AG04450 (cell line): ENCODE measurements at regions of chr2 and their contacts with region 1.

Region 1: GRCh38 chr2:97697252-97698235 is 15.8 kb upstream of the ZAP70 start:
- DNase-seq: peak; percentile 50
- H3K4me3 ChIP-seq: no peak overlapping the region
- H3K27ac ChIP-seq: no peak overlapping the region
- H3K27me3 ChIP-seq: no peaks in the 10 kb centered on the region
- CTCF ChIP-seq: peak; percentile 95

Region 2: DNA sequence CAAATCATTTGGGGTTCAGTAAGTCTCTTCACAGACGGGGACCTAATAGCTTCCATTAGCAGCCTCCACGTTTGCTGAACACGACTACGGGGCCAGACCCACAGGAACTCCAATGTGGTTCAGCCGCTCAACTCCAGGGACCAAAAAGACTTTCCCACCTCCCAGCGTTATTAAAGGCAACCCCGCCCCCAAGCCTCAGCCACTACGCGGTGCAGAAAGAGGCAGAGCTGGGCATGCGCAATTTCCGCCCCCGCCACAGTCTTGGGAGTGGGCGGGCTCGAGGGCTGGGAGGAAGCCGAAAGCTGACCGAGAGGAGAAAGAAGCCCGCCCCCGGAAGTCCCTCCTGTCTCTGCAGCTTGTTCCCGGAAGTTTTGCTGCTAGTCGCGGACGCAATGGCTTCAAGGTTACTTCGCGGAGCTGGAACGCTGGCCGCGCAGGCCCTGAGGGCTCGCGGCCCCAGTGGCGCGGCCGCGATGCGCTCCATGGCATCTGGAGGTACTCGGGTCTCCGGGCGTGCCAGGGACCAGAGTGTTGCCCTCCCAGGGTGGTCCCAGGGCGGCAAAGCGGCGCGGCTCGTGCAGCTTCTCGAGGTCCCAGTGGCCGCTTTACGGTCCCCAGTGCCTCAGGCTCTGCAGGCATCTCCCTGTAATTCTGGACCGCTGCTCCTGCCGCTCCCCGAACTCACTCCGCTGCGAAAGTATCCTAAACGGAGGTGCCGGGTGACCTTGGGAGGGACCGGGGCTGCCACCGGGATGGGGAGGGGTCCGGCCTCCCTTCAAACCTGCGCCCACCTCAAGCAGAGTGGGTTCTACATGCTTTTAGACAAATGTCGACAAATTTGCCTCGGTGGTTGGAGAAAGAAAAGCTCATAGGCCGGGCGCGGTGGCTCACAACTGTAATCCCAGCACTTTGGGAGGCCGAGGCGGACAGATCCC is 51.6 kb before region 1 on chr2 and contains the start of gene COX5B:
- CTCF ChIA-PET with region 1: interaction called, 10 read pairs
- POLR2A ChIA-PET with region 1: interaction called, 3 read pairs
- DNase-seq: peak; percentile 92
- H3K4me3 ChIP-seq: peak within 1 kb of the TSS; percentile 97
- H3K27ac ChIP-seq: peak within 1 kb of the TSS; percentile 49
- H3K27me3 ChIP-seq: no peaks in the 10 kb centered on the region
- CTCF ChIP-seq: no peak
- polyA plus RNA-seq, gene COX5B: 287 and 302 TPM in 2 replicates

Region 3: GRCh38 chr2:97710596-97711386 is 13.2 kb after region 1 on chr2:
- CTCF ChIA-PET with region 1: interaction called, 38 read pairs
- POLR2A ChIA-PET with region 1: interaction called, 3 read pairs
- DNase-seq: no peak
- H3K4me3 ChIP-seq: no peak overlapping the region
- H3K27ac ChIP-seq: no peak overlapping the region
- H3K27me3 ChIP-seq: peaks cover 14% of the 10 kb centered on the region
- CTCF ChIP-seq: no peak

Region 4: GRCh38 chr2:97747716-97748115 is 50.2 kb after region 1 on chr2:
- CTCF ChIA-PET with region 1: interaction called, 11 read pairs
- POLR2A ChIA-PET with region 1: interaction called, 3 read pairs
- DNase-seq: no peak
- H3K4me3 ChIP-seq: no peak overlapping the region
- H3K27ac ChIP-seq: no peak overlapping the region
- H3K27me3 ChIP-seq: no peaks in the 10 kb centered on the region
- CTCF ChIP-seq: no peak

Region 5: DNA sequence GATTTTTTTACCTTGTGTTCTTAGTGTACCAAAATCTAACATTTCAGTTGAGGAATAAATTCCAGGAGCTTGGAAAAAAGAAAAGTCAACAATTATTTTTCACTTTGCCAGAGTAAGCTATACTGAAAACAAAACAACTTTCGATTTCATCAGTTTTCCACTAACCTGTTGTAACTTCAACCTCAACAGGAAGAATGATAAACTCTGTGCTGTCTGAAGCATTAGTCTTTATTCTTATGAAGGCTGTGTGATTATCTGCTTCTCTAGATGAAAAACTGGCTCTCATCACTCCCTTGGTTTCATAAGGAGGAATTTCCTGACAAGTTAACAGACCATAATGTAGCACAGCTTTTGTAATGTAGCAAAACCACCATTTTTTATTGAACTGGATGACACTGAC is 137.1 kb after region 1 on chr2:
- CTCF ChIA-PET with region 1: no interaction called
- POLR2A ChIA-PET with region 1: no interaction called
- DNase-seq: no peak
- H3K4me3 ChIP-seq: no peak overlapping the region
- H3K27ac ChIP-seq: no peak overlapping the region
- H3K27me3 ChIP-seq: no peaks in the 10 kb centered on the region
- CTCF ChIP-seq: no peak

Region 6: DNA sequence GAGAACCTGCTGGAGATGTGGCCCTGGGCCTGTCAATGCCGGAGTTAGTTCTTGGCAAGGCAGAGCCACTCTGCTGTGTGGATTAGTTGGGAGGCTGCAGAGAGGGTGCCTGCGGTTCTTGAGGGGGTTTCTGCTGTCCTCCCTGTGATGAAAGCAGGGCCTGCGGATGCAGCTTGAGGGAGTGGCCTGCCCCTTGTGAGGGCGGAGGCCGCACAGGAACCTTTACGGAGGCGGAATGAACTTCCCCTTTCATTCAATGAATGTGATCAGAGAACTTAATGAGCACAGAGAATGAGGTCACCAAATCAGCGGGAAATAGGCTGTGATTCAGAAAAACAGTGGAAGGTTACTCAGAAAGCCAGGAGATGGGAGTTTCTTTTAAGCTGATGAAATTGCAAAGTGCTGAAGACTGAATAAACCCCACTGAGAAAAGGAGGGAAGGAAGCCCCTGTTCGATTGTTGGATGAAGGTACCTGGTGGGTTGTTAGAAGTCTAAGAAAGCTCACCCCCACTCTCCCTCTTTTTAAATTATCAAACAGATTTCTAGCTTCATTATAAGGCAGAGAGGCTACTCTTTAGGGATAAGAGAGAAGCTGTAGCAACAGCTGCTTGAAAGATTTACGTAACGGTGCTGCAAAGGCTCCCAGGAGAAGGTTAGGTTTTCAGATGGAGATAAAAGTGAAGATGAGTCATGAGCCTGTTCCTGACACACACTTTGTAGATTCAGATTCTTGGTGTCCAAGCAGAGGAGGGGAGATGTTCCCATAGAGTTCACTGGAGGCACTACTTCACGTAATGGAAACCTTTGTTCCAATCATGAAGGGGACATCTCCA is 436.8 kb after region 1 on chr2:
- CTCF ChIA-PET with region 1: no interaction called
- POLR2A ChIA-PET with region 1: no interaction called
- DNase-seq: no peak
- H3K4me3 ChIP-seq: no peak overlapping the region
- H3K27ac ChIP-seq: no peak overlapping the region
- H3K27me3 ChIP-seq: peaks cover 2% of the 10 kb centered on the region
- CTCF ChIP-seq: no peak

Region 7: GRCh38 chr2:98269274-98269673 is 571.7 kb after region 1 on chr2:
- CTCF ChIA-PET with region 1: interaction called, 59 read pairs
- POLR2A ChIA-PET with region 1: no interaction called
- DNase-seq: peak; percentile 15
- H3K4me3 ChIP-seq: no peak overlapping the region
- H3K27ac ChIP-seq: no peak overlapping the region
- H3K27me3 ChIP-seq: peaks cover 3% of the 10 kb centered on the region
- CTCF ChIP-seq: peak; percentile 80

Region 8: DNA sequence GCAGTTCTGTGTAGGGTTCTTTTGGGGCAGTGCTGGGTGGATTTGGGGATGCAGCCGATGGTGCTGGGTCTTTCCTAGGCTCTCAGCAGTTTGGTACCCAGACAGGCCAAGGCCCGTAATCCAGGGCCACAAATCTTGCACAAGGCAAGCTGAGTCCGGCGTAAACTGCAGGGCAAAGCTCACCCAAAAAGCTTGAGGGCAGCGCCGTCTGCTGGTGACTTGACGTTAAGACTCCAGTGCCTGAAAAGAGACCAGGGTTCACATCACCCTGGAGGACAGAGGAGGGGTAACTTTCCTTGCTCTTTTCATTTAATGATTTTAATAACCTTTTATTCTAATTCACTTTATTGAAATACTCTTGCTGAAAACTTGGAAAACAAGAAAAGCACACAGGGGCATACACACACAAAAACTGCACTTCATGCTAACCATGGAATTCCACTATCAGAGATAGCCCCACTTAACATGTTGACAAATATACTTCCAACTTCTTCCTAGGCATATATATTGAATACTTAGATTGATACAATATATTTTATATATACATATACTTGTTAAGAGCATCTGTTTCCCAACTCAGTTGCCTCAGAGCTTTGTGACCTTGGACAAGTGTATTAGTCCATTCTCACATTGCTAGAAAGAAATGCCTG is 687.6 kb after region 1 on chr2:
- CTCF ChIA-PET with region 1: interaction called, 107 read pairs
- POLR2A ChIA-PET with region 1: no interaction called
- DNase-seq: peak; percentile 27
- H3K4me3 ChIP-seq: no peak overlapping the region
- H3K27ac ChIP-seq: no peak overlapping the region
- H3K27me3 ChIP-seq: peaks cover 26% of the 10 kb centered on the region
- CTCF ChIP-seq: peak; percentile 100